CD8-positive, alpha-beta T cell (primary cell): ENCODE measurements at regions of chr5 and their contacts with region 1.

Region 1: GRCh38 chr5:94618493-94619328 is at the starts of genes KIAA0825 and SLF1:
- DNase-seq: peak; percentile 68 to 91 (median 86)
- ATAC-seq: peak; percentile 87
- H3K4me3 ChIP-seq: peak within 1 kb of the TSS; percentile 72 to 80
- H3K4me3 Mint-ChIP-seq: peak within 1 kb of the TSS; percentile 94
- H3K27ac ChIP-seq: peak within 1 kb of the TSS; percentile 59 to 74
- H3K27ac Mint-ChIP-seq: peak within 1 kb of the TSS; percentile 89
- H3K4me1 ChIP-seq: peaks cover 22% of the 10 kb centered on the region
- H3K4me1 Mint-ChIP-seq: peaks cover 53% of the 10 kb centered on the region
- H3K27me3 ChIP-seq: no peaks in the 10 kb centered on the region
- H3K27me3 Mint-ChIP-seq: no peaks in the 10 kb centered on the region
- CTCF ChIP-seq: no peak
- total RNA-seq, gene KIAA0825: 0.89 to 1.0 TPM
- total RNA-seq, gene SLF1: 10.0 to 11.1 TPM

Region 2: GRCh38 chr5:93607367-93608258 is 1011.1 kb before region 1 on chr5:
- CTCF ChIA-PET with region 1: no interaction called
- POLR2A ChIA-PET with region 1: no interaction called
- intact Hi-C with region 1: loop called in 1 of 2 experiments (anchors 10 kb)
- DNase-seq: peak in 3 of 9 experiments; percentile 33 to 72 (median 61)
- ATAC-seq: peak; percentile 73
- H3K4me3 ChIP-seq: no peak overlapping the region
- H3K4me3 Mint-ChIP-seq: no peak overlapping the region
- H3K27ac ChIP-seq: no peak overlapping the region
- H3K27ac Mint-ChIP-seq: no peak overlapping the region
- H3K4me1 ChIP-seq: peaks cover 6% of the 10 kb centered on the region
- H3K4me1 Mint-ChIP-seq: peaks cover 21% of the 10 kb centered on the region
- H3K27me3 ChIP-seq: peaks cover 65 to 81% of the 10 kb centered on the region in 2 experiments
- H3K27me3 Mint-ChIP-seq: peaks cover 85% of the 10 kb centered on the region
- CTCF ChIP-seq: peak; percentile 53

Region 3: GRCh38 chr5:94524841-94525697 is 93.6 kb before region 1 on chr5:
- CTCF ChIA-PET with region 1: interaction called, 5 read pairs
- POLR2A ChIA-PET with region 1: no interaction called
- intact Hi-C with region 1: loop called (anchors 2 to 5 kb)
- DNase-seq: peak in 2 of 9 experiments; percentile 61 to 71
- ATAC-seq: peak; percentile 65
- H3K4me3 ChIP-seq: no peak overlapping the region
- H3K4me3 Mint-ChIP-seq: no peak overlapping the region
- H3K27ac ChIP-seq: no peak overlapping the region
- H3K27ac Mint-ChIP-seq: no peak overlapping the region
- H3K4me1 ChIP-seq: no peaks in the 10 kb centered on the region
- H3K4me1 Mint-ChIP-seq: no peaks in the 10 kb centered on the region
- H3K27me3 ChIP-seq: no peaks in the 10 kb centered on the region
- H3K27me3 Mint-ChIP-seq: no peaks in the 10 kb centered on the region
- CTCF ChIP-seq: peak; percentile 62

Region 4: DNA sequence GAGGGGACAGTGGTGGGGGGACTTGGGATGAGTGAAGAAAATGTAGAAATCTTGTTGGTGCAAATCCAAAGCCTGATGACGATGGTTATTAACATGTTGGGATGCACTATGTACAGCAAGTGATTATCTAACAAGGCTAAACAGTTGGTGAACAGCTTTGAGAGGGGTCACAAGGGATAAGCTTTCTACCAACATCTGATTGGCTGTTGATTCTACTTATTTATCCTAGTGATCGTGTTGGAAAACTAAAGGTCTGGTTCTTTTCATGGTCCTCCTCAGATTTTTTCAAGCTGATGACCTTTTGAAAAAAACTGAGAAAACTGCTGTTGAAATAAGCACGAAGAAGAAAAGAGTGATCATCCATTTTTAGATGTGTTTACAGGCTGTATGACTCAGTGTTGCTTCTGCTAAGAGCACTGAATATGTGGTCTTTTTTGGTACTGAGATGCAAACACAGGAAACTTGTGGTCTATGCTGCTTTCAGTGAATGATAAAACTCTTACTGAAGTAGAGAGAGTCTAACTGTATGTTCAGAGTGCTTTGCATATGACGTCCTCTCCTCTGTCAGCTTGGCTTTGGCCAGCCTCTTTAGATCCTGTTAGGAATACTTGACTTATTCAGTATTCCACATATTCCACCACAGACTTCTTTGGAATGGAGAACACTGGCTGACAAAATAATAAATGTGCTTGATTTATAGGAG is 174.6 kb after region 1 on chr5:
- CTCF ChIA-PET with region 1: no interaction called
- POLR2A ChIA-PET with region 1: interaction called, 3 read pairs
- intact Hi-C with region 1: loop called in 1 of 2 experiments (anchors 2 kb)
- DNase-seq: peak in 4 of 9 experiments; percentile 4 to 81 (median 40)
- ATAC-seq: peak; percentile 92
- H3K4me3 ChIP-seq: no peak overlapping the region
- H3K4me3 Mint-ChIP-seq: peak overlapping the region; percentile 44
- H3K27ac ChIP-seq: peak overlapping the region; percentile 20 to 80
- H3K27ac Mint-ChIP-seq: peak overlapping the region; percentile 92
- H3K4me1 ChIP-seq: peaks cover 30% of the 10 kb centered on the region
- H3K4me1 Mint-ChIP-seq: peaks cover 37% of the 10 kb centered on the region
- H3K27me3 ChIP-seq: no peaks in the 10 kb centered on the region
- H3K27me3 Mint-ChIP-seq: no peaks in the 10 kb centered on the region
- CTCF ChIP-seq: no peak

Region 5: DNA sequence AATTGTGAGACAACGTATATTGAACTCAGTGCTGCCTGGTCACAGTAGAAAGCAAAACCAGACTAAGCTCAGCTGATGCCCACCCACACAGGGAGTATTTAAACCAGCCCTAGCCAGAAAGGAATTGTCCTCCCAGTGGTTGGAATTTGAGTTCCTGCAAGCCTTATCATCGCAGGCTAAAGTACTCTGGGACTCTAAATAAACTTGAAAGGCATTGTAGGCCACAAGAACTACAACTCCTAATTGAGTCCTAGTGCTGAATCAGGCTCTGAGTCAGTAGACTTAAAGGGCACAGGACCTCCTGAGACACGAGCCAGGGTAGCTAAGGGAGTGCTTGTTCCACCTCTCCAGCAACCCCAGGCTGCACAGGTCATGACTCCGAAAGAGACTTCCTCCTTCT is 494.8 kb after region 1 on chr5:
- CTCF ChIA-PET with region 1: no interaction called
- POLR2A ChIA-PET with region 1: no interaction called
- intact Hi-C with region 1: no loop called
- DNase-seq: no peak
- ATAC-seq: no peak
- H3K4me3 ChIP-seq: no peak overlapping the region
- H3K4me3 Mint-ChIP-seq: no peak overlapping the region
- H3K27ac ChIP-seq: no peak overlapping the region
- H3K27ac Mint-ChIP-seq: no peak overlapping the region
- H3K4me1 ChIP-seq: no peaks in the 10 kb centered on the region
- H3K4me1 Mint-ChIP-seq: no peaks in the 10 kb centered on the region
- H3K27me3 ChIP-seq: no peaks in the 10 kb centered on the region
- H3K27me3 Mint-ChIP-seq: no peaks in the 10 kb centered on the region
- CTCF ChIP-seq: no peak

Region 6: GRCh38 chr5:95655575-95655974 is 1036.9 kb after region 1 on chr5:
- CTCF ChIA-PET with region 1: no interaction called
- POLR2A ChIA-PET with region 1: no interaction called
- intact Hi-C with region 1: loop called in 1 of 2 experiments (anchors 10 kb)
- DNase-seq: no peak
- ATAC-seq: no peak
- H3K4me3 ChIP-seq: no peak overlapping the region
- H3K4me3 Mint-ChIP-seq: no peak overlapping the region
- H3K27ac ChIP-seq: no peak overlapping the region
- H3K27ac Mint-ChIP-seq: no peak overlapping the region
- H3K4me1 ChIP-seq: no peaks in the 10 kb centered on the region
- H3K4me1 Mint-ChIP-seq: no peaks in the 10 kb centered on the region
- H3K27me3 ChIP-seq: no peaks in the 10 kb centered on the region
- H3K27me3 Mint-ChIP-seq: no peaks in the 10 kb centered on the region
- CTCF ChIP-seq: no peak